ENCODE measurements at regions of chr17 and their contacts with region 1.

Region 1: DNA sequence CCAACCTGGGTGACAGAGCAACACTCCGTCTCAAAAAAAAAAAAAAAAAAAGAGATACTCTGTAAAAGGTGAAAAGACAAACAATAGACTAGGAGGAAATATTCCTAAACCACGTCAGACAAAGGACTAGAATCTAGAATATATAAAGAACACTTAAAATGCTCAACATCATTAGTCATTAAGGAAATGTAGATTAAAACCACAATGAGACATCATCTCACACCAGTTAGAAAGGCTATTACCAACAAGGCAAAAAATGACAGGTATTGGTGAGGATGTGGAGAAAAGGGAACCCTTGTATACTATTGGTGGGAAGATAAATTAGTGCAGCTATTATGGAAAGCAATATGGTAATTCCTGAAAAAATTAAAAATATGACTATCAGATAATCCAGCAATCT is 903.1 kb upstream of the SOX9 start:
- DNase-seq: no peak
- ATAC-seq: no peak
- H3K4me3 ChIP-seq: no peak overlapping the region
- H3K27ac ChIP-seq: no peak overlapping the region
- H3K4me1 ChIP-seq: no peaks in the 10 kb centered on the region
- H3K27me3 ChIP-seq: no peaks in the 10 kb centered on the region
- CTCF ChIP-seq: no peak
- POLR2A ChIP-seq: no peak

Region 2: DNA sequence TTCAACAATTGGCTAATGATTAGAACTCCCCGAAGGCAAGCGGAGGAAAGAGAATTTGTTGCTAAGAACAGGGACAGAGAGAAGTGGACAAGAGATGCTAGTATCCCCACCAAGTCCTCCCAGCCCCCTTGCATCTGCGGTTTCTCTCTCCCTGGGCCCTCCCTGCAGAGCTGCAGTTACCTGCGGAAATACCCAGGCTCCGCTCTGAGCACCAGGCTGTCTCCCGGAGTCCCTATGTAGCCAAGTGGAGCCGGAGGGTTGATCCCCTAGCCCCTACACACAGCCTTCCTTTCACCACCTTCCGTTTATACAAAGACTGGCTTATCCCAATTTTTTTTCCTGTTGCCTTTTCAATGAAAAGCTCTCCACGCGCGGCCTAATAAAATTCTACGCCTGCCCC is 214.0 kb before region 1 on chr17:
- intact Hi-C with region 1: no loop called
- DNase-seq: no peak
- ATAC-seq: no peak
- H3K4me3 ChIP-seq: no peak overlapping the region
- H3K27ac ChIP-seq: no peak overlapping the region
- H3K4me1 ChIP-seq: no peaks in the 10 kb centered on the region
- H3K27me3 ChIP-seq: peaks cover 0 to 7% (median 0%) of the 10 kb centered on the region in 9 donors
- CTCF ChIP-seq: no peak
- POLR2A ChIP-seq: no peak

Region 3: GRCh38 chr17:72618001-72618509 is 1400.3 kb after region 1 on chr17:
- intact Hi-C with region 1: loop called in 1 of 10 experiments (anchors 10 kb)
- DNase-seq: no peak
- ATAC-seq: peak in 2 of 4 donors; percentile 39 to 49
- H3K4me3 ChIP-seq: no peak overlapping the region
- H3K27ac ChIP-seq: no peak overlapping the region
- H3K4me1 ChIP-seq: peaks cover 0 to 7% (median 0%) of the 10 kb centered on the region in 12 donors
- H3K27me3 ChIP-seq: peaks cover 0 to 52% (median 11%) of the 10 kb centered on the region in 9 donors
- CTCF ChIP-seq: no peak
- POLR2A ChIP-seq: no peak